T-cell (primary cell): ENCODE measurements at regions of chr6 and their contacts with region 1.

Region 1: GRCh38 chr6:19655744-19656143 is 181.4 kb upstream of the ID4 start:
- DNase-seq: no peak
- ATAC-seq: no peak
- H3K4me3 ChIP-seq: no peak overlapping the region
- H3K4me3 Mint-ChIP-seq: no peak overlapping the region
- H3K27ac ChIP-seq: no peak overlapping the region
- H3K27ac Mint-ChIP-seq: no peak overlapping the region
- H3K4me1 ChIP-seq: no peaks in the 10 kb centered on the region
- H3K4me1 Mint-ChIP-seq: no peaks in the 10 kb centered on the region
- H3K27me3 ChIP-seq: no peaks in the 10 kb centered on the region
- H3K27me3 Mint-ChIP-seq: no peaks in the 10 kb centered on the region

Region 2: GRCh38 chr6:19705606-19706005 is 49.9 kb after region 1 on chr6:
- CTCF ChIA-PET with region 1: no interaction called
- POLR2A ChIA-PET with region 1: interaction called in 1 of 2 experiments, 15 read pairs
- DNase-seq: no peak
- ATAC-seq: no peak
- H3K4me3 ChIP-seq: no peak overlapping the region
- H3K4me3 Mint-ChIP-seq: no peak overlapping the region
- H3K27ac ChIP-seq: no peak overlapping the region
- H3K27ac Mint-ChIP-seq: no peak overlapping the region
- H3K4me1 ChIP-seq: no peaks in the 10 kb centered on the region
- H3K4me1 Mint-ChIP-seq: no peaks in the 10 kb centered on the region
- H3K27me3 ChIP-seq: no peaks in the 10 kb centered on the region
- H3K27me3 Mint-ChIP-seq: no peaks in the 10 kb centered on the region

Region 3: GRCh38 chr6:19836799-19837510 is 181.2 kb after region 1 on chr6 and contains the start of gene ID4:
- CTCF ChIA-PET with region 1: no interaction called
- POLR2A ChIA-PET with region 1: no interaction called
- DNase-seq: no peak
- ATAC-seq: no peak
- H3K4me3 ChIP-seq: no peak within 1 kb of the TSS
- H3K4me3 Mint-ChIP-seq: peak within 1 kb of the TSS in 1 of 3 donors; percentile 3
- H3K27ac ChIP-seq: no peak within 1 kb of the TSS
- H3K27ac Mint-ChIP-seq: no peak within 1 kb of the TSS
- H3K4me1 ChIP-seq: no peaks in the 10 kb centered on the region
- H3K4me1 Mint-ChIP-seq: peaks cover 5 to 8% (median 5%) of the 10 kb centered on the region in 3 donors
- H3K27me3 ChIP-seq: peaks cover 18 to 29% of the 10 kb centered on the region in 2 experiments
- H3K27me3 Mint-ChIP-seq: peaks cover 28 to 46% of the 10 kb centered on the region in 2 donors
- total RNA-seq, gene ID4: not detected